ENCODE measurements at regions of chr11 and their contacts with region 1.

Region 1: DNA sequence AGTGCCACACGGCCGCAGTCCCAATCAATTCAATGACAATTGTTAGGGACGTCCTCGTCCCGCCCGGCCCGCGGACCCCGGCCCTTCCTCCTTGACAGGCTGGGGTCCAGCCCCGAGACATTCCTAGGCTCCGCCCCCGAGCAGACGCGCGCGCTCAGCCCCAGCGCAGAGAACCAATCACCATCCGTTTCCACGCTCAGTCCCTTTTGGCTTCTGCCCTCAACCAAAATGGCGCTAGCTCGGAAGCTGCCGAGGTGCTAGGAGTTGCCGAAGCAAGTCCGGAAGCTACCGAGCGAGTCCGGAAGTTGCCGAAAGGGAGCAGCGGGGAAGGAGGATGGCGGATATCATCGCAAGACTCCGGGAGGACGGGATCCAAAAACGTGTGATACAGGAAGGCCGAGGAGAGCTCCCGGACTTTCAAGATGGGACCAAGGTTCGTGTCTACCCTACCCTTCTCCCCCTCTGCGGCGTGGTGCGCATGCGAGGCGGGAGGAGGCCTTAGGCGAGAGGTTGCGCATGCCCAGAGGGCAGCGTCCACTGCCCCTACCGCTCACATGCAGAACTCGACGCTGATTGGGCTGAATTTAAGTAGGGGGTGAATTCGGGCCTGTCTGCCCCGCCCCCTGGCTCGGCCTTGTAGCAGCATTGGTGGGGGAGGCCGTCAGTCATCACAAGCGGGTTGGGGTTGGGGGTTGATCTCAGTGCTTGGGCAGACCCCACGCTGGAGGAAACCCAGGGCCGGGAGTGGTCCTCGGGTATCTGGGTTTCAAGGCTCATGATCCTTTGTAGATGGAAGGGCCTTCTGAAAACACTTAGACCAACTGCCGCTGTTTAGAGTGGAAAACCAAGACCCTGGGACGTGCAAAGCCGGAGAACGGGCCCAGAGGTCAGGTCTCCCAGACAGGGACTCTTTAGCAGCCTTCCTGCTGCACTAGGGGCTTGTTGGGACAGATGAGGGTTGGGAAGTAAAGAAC is at the start of gene AIP:
- DNase-seq: peak; percentile 98
- H3K4me3 Mint-ChIP-seq: peak within 1 kb of the TSS; percentile 89
- H3K27ac Mint-ChIP-seq: peak within 1 kb of the TSS; percentile 99
- H3K4me1 Mint-ChIP-seq: peaks cover 55% of the 10 kb centered on the region
- H3K27me3 Mint-ChIP-seq: no peaks in the 10 kb centered on the region
- total RNA-seq, gene AIP: 152 to 159 TPM

Region 2: GRCh38 chr11:67468835-67469811 is 14.0 kb before region 1 on chr11 and contains the start of gene TMEM134:
- CTCF ChIA-PET with region 1: interaction called, 3 read pairs
- POLR2A ChIA-PET with region 1: interaction called, 94 read pairs
- DNase-seq: peak; percentile 93
- H3K4me3 Mint-ChIP-seq: peak within 1 kb of the TSS; percentile 86
- H3K27ac Mint-ChIP-seq: peak within 1 kb of the TSS; percentile 75
- H3K4me1 Mint-ChIP-seq: peaks cover 40% of the 10 kb centered on the region
- H3K27me3 Mint-ChIP-seq: no peaks in the 10 kb centered on the region
- total RNA-seq, gene TMEM134: 36.3 to 37.6 TPM

Region 3: GRCh38 chr11:67507864-67508485 is 24.9 kb after region 1 on chr11 and contains the start of gene CDK2AP2:
- CTCF ChIA-PET with region 1: interaction called, 5 read pairs
- POLR2A ChIA-PET with region 1: interaction called, 39 read pairs
- DNase-seq: peak; percentile 99
- H3K4me3 Mint-ChIP-seq: peak within 1 kb of the TSS; percentile 93
- H3K27ac Mint-ChIP-seq: peak within 1 kb of the TSS; percentile 90
- H3K4me1 Mint-ChIP-seq: peaks cover 41% of the 10 kb centered on the region
- H3K27me3 Mint-ChIP-seq: peaks cover 8% of the 10 kb centered on the region
- total RNA-seq, gene CDK2AP2: 116 to 119 TPM